Right ventricle myocardium inferior (tissue), 1 donor: ENCODE measurements at regions of chr11 and their contacts with region 1.

Region 1: DNA sequence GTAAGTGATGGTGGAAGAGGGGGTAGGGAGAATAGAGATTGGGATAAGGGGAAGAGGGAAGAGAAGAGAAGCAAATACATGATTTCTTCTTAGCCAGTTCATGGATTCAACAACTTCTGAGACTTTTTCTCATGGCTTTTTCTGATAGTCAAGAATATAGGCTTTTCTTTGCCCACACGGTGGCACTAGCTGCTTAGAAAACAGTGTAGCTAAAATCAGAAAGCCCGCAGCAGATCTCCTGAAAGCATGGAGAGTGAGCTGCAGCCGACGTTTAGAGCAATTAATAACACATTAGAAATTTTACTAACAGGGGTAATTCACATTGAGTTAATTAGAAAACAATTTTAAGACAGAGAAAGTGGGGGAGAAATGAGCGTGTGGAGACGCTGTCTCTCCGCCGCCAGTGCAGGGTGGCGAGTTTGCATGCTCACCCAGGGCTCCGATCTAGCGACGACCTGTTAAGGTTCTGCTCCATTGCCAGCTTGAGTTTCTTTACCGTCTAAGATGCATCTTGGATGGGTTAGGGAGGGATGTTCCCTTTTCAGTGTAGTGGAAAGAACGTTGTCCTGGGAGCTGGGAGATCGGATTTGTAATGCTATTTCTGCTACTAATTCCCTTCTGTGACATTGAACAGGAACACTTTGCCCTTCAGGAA is 3.3 kb upstream of the RAG1 start:
- DNase-seq: no peak
- ATAC-seq: peak; percentile 39

Region 2: DNA sequence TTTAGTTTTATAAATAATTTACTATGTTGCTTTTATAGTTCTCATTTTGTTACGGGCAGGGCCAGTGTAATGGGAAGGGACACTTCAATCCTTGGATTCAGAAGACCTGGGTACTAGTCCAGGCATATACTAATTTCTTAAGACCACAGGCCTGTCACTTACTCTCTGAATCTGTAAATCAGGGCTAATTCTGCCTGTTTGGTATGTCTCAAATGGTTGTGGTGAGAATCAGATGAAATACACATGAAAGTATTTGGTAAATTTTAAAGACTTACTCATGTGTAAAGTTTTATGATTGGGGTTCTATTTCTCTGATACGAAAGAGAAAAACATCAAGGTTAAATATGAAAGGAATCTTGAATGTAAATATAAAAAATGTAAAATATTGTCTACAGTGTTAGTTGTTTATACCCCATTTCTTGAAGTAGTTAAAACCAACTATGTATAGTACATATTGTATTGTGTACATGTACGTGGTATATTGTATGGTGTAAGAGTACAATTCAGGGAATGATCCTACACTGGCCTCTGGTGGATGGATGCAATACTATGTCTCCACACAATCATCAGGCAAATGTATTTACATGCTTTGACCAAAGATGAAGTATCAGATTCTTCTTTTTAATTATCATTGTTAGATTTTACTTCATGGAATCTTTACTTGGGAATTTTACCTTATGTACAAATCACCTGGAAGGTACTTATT is 58.1 kb after region 1 on chr11:
- intact Hi-C with region 1: loop called (anchors 1 kb)
- DNase-seq: no peak
- ATAC-seq: peak; percentile 65

Region 3: DNA sequence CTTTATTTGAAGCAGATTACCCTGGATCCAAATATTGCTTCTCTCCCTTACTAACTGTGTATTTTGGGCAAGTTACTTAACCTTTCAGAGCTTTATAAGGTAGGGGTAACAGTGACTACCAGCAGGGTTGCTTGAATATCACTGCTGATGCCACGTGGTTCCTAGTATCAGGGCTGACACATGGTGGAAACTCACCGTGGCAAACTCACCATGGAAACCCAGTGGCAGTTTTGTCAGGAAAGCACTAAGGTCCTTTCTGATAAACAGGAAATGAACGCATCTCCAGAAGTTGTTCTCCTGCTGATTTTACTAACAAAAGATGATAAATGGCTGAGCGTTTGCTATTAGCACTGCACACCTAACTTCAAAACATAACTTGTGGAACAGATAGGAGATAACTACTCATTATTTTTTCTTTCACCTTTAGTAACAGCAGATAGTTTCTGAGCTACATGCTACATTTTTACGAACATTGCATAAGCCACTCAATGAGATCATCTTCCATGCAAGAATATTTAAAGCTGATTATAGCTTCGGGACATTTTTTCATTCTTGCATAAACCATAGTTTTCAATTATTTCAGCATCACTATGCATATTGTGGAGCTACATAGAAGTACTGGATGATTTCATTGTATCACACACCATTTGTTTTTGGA is 93.2 kb after region 1 on chr11:
- intact Hi-C with region 1: no loop called
- DNase-seq: no peak
- ATAC-seq: no peak

Region 4: GRCh38 chr11:36672813-36673450 is 108.4 kb after region 1 on chr11:
- intact Hi-C with region 1: loop called (anchors 2 kb)
- DNase-seq: no peak
- ATAC-seq: no peak

Region 5: DNA sequence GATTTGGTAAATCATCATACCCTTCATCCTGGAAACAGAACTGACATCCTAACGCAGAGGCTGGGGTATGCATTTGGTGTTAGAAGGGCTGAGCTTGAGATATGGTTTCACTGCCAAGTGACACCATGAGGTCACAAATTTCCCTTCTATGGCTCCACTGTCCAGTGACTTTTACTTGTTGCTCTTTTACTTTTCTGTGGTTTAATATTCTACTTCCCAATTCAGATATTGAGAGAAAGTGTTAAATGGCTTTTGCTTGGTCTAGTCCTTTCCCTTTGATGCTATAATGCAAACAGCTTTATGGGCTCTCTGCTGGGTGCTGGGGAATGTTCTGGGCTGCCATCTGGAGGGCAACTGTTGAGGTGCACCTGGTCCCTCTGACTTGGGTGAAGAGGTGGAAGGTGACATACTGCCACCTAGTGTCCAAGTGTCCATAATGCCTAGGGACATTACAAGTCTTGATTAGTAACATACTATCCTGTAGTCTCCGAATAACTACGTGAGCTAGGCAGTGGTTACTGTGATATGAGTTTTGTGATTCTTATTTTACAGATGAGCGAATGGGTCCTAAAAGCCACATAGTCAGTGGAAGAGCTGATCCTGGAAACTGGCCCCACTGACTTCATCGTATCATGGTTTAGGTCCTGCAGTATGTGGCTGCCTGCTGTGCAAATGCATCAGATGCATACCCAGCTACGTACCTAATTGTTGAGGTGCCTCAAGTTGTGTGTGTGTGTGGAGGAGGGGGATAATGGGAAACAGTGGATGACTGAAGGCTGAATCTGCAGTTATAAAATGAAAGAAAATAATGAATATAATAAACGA is 182.6 kb after region 1 on chr11:
- intact Hi-C with region 1: loop called (anchors 5 kb)
- DNase-seq: peak; percentile 82
- ATAC-seq: peak; percentile 95